Heart left ventricle (tissue), 16 donors: ENCODE measurements at regions of chr5 and their contacts with region 1.

Region 1: DNA sequence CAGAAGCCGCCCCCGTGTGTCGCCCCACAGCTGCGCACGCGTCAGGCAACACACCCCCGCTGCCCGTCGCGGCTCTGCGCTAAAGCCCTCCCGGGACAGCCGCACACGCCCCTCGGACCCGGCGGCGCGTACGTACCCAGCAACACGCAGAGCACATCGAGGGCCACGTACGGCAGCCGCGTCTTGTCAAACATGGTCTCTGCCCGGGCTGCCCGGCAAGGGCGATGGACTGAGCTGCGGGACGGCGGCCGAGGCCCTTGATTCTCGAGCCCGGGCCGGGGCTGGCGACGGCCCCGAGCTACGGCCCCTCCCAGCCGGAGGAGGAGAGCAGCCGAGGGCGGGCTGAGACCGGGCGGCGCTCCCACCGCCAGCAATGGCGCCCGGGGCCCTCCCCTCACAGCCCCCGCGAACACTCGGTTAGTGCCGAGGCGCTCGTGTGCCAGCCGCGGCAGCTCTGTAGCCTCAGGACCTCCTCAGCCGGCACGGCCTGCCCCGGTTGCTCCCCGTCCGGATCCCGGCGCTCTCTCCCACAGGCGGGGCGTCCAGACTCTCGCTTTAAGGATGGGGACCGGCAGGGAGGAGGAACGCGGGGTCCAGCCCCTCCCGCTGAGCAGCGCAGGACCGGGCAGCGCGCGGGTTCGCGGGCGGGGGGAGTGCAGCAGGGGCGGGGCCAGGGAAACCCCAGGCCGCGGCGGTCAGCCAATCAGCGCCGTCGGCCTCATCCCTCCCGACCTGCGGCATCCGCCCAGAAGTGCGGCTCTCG is at the start of gene PLPP1:
- DNase-seq: peak; percentile 95
- ATAC-seq: peak; percentile 93 to 96 (median 95)
- H3K4me3 ChIP-seq: peak within 1 kb of the TSS; percentile 58 to 99 (median 88)
- H3K27ac ChIP-seq: peak within 1 kb of the TSS; percentile 89 to 99 (median 96)
- H3K4me1 ChIP-seq: peaks cover 0 to 49% (median 34%) of the 10 kb centered on the region in 12 donors
- H3K27me3 ChIP-seq: no peaks in the 10 kb centered on the region
- CTCF ChIP-seq: peak in 2 of 12 donors; percentile 16 to 17
- POLR2A ChIP-seq: peak in 1 of 2 donors; percentile 97
- total RNA-seq, gene PLPP1: 65.0 to 223 (median 81.5) TPM

Region 2: GRCh38 chr5:55258339-55258738 is 276.3 kb before region 1 on chr5:
- intact Hi-C with region 1: no loop called
- DNase-seq: no peak
- ATAC-seq: no peak
- H3K4me3 ChIP-seq: no peak overlapping the region
- H3K27ac ChIP-seq: no peak overlapping the region
- H3K4me1 ChIP-seq: no peaks in the 10 kb centered on the region
- H3K27me3 ChIP-seq: no peaks in the 10 kb centered on the region
- CTCF ChIP-seq: no peak
- POLR2A ChIP-seq: no peak

Region 3: DNA sequence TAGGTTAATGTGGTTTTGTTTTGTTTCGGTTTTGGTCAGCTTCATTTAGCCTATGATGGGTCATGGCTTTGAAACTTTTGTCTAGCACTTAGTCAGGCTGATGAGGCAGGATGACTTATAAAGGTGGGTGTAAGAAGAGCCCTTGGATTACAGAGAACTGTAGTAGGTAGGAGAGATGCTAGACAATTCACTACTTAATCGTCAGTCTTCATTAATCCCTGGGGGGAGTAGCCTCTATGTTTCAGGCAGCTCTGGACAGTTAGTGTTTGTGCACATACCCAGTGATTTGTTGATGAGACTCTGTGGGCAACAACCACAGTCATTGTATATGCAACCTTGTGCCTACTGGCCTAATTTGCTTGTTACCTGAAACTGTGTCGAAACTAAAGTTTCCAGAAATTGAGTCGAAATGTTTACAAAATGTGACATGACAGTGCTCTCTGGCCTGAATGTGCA is 113.5 kb before region 1 on chr5:
- intact Hi-C with region 1: loop called in 3 of 10 experiments (anchors 5 to 10 kb)
- DNase-seq: no peak
- ATAC-seq: no peak
- H3K4me3 ChIP-seq: no peak overlapping the region
- H3K27ac ChIP-seq: peak overlapping the region in 3 of 12 donors; percentile 18 to 46 (median 21)
- H3K4me1 ChIP-seq: peaks cover 0 to 43% (median 15%) of the 10 kb centered on the region in 12 donors
- H3K27me3 ChIP-seq: no peaks in the 10 kb centered on the region
- CTCF ChIP-seq: no peak
- POLR2A ChIP-seq: no peak

Region 4: DNA sequence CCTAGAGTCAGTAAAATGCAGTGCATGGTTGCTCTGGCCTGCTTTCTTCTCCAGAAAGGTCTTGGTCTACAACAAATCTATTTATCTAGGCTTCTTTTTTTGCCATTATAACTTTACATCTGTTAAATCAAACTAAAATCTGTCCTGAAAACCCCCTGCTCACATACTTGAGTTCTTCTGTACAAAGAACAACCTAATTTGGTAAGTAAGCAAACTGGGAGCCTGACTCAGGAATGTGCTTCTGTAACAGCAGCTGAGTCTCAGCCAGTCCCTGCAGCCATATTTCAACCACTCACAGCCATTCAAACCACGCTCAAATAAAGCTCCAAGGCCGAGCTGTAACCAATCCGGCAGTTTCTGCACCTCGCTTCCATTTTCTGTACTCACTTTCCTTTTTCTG is 95.6 kb before region 1 on chr5:
- intact Hi-C with region 1: loop called in 6 of 10 experiments (anchors 2 to 10 kb)
- DNase-seq: no peak
- ATAC-seq: peak in 3 of 4 donors; percentile 22 to 41 (median 28)
- H3K4me3 ChIP-seq: no peak overlapping the region
- H3K27ac ChIP-seq: peak overlapping the region; percentile 45 to 89 (median 82)
- H3K4me1 ChIP-seq: peaks cover 2 to 65% (median 48%) of the 10 kb centered on the region in 12 donors
- H3K27me3 ChIP-seq: no peaks in the 10 kb centered on the region
- CTCF ChIP-seq: no peak
- POLR2A ChIP-seq: no peak

Region 5: GRCh38 chr5:55509796-55510522 is 24.7 kb before region 1 on chr5:
- intact Hi-C with region 1: no loop called
- DNase-seq: no peak
- ATAC-seq: peak; percentile 71 to 78 (median 72)
- H3K4me3 ChIP-seq: no peak overlapping the region
- H3K27ac ChIP-seq: peak overlapping the region in 9 of 12 donors; percentile 2 to 60 (median 20)
- H3K4me1 ChIP-seq: peaks cover 4 to 73% (median 49%) of the 10 kb centered on the region in 12 donors
- H3K27me3 ChIP-seq: no peaks in the 10 kb centered on the region
- CTCF ChIP-seq: no peak
- POLR2A ChIP-seq: no peak

Region 6: GRCh38 chr5:55570026-55570425 is 35.4 kb after region 1 on chr5:
- intact Hi-C with region 1: loop called in 6 of 10 experiments (anchors 5 kb)
- DNase-seq: no peak
- ATAC-seq: no peak
- H3K4me3 ChIP-seq: no peak overlapping the region
- H3K27ac ChIP-seq: peak overlapping the region in 2 of 12 donors; percentile 21 to 73
- H3K4me1 ChIP-seq: peaks cover 0 to 17% (median 8%) of the 10 kb centered on the region in 12 donors
- H3K27me3 ChIP-seq: no peaks in the 10 kb centered on the region
- CTCF ChIP-seq: no peak
- POLR2A ChIP-seq: no peak

Region 7: DNA sequence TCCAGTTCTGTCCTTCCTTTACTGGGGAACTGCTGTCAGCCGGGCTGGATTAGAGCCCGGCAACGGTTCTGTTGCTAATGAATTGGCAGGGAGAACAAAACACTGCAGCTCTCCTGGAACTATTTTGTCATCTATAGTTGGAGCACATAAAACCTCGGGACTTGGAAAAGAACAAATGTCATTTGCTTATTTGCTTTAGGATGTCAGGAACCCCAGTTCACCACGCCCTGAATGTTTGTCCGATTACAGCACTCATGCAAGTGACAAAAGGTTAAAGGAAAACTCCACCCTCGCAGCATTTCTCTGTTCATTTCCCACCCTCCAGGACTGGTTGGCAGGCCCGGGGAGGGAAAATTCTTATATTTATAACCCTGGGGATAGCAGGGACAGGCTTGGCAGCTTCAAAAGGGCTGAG is 66.6 kb after region 1 on chr5:
- intact Hi-C with region 1: loop called in 9 of 10 experiments (anchors 1 to 10 kb)
- DNase-seq: peak; percentile 83 to 90 (median 87)
- ATAC-seq: peak; percentile 83 to 89 (median 87)
- H3K4me3 ChIP-seq: peak overlapping the region in 9 of 12 donors; percentile 24 to 47 (median 39)
- H3K27ac ChIP-seq: peak overlapping the region; percentile 82 to 99 (median 94)
- H3K4me1 ChIP-seq: peaks cover 22 to 85% (median 80%) of the 10 kb centered on the region in 12 donors
- H3K27me3 ChIP-seq: no peaks in the 10 kb centered on the region
- CTCF ChIP-seq: no peak
- POLR2A ChIP-seq: peak in 1 of 2 donors; percentile 45

Region 8: GRCh38 chr5:55680353-55680752 is 145.7 kb after region 1 on chr5:
- intact Hi-C with region 1: loop called in 2 of 10 experiments (anchors 5 to 10 kb)
- DNase-seq: no peak
- ATAC-seq: peak in 1 of 4 donors; percentile 41
- H3K4me3 ChIP-seq: no peak overlapping the region
- H3K27ac ChIP-seq: peak overlapping the region in 6 of 12 donors; percentile 11 to 56 (median 27)
- H3K4me1 ChIP-seq: peaks cover 0 to 32% (median 16%) of the 10 kb centered on the region in 12 donors
- H3K27me3 ChIP-seq: no peaks in the 10 kb centered on the region
- CTCF ChIP-seq: no peak
- POLR2A ChIP-seq: no peak